ENCODE measurements at regions of chr1 and their contacts with region 1.

Region 1: DNA sequence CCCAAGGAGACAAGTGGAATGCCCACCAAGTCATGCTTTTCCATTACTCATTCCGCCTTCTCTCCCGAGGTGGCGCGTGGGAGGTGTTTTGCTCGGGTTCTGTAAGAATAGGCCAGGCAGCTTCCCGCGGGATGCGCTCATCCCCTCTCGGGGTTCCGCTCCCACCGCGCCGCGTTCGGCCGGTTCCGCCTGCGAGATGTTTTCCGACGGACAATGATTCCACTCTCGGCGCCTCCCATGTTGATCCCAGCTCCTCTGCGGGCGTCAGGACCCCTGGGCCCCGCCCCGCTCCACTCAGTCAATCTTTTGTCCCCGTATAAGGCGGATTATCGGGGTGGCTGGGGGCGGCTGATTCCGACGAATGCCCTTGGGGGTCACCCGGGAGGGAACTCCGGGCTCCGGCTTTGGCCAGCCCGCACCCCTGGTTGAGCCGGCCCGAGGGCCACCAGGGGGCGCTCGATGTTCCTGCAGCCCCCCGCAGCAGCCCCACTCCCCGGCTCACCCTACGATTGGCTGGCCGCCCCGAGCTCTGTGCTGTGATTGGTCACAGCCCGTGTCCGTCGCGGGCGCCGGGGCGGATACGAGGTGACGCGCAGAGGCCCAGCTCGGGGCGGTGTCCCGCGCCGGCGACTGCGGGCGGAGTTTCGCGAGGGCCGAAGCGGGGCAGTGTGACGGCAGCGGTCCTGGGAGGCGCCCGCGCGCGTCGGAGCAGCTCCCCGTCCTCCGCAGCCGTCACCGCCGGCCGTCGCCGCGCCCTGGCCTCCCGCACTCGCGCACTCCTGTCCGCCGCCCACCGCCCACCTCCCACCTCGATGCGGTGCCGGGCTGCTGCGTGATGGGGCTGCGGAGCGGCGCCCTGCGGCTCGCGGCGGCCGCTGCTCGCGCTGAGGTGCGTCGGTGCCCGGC is at the start of gene KIF1B:
- DNase-seq: peak; percentile 99
- ATAC-seq: peak; percentile 99
- total RNA-seq, gene KIF1B: 70.4 TPM

Region 2: DNA sequence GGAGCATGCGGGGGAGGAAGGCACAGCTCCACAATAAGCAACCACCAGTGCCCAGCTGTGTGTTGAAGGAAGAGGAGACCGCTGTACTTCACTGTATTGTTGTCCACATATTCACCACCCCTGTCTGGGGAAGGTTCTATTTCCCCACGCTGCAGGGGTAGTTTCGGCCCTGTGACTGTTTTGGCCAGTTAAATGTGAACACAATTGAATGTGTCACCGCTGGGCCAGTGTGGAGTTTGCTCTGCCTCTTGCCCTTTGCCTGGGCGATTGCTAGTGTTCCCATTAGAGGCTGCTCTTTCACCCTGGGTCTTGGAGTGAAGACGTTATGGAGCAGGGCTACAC is 144.8 kb before region 1 on chr1:
- intact Hi-C with region 1: loop called (anchors 5 kb)
- DNase-seq: no peak
- ATAC-seq: peak; percentile 63

Region 3: DNA sequence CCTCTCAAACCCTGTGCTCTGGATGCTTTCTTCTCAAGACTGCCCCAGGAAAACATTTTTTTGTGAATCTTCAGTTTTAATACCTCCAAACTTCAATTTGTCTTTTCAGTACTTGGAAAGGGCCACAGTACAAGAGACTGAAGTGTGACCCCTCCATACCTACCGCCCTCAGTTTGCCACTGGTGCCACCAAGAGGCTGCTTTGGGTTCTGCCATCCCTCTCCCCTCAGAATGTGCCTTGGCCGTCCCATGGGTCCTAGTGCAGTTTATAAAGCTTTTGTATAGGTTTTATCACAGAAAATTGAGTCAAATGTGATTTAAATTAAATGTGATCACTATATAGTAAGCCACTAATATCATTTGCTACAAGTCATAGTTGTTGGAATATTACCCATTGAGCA is 127.9 kb after region 1 on chr1:
- intact Hi-C with region 1: loop called (anchors 10 kb)
- DNase-seq: peak; percentile 67
- ATAC-seq: peak; percentile 94

Measured in sciatic nerve (tissue), 2 donors.